ENCODE measurements at regions of chr13 and their contacts with region 1.

Region 1: GRCh38 chr13:95137096-95137495 is 164.2 kb downstream of the ABCC4 start:
- DNase-seq: no peak

Region 2: DNA sequence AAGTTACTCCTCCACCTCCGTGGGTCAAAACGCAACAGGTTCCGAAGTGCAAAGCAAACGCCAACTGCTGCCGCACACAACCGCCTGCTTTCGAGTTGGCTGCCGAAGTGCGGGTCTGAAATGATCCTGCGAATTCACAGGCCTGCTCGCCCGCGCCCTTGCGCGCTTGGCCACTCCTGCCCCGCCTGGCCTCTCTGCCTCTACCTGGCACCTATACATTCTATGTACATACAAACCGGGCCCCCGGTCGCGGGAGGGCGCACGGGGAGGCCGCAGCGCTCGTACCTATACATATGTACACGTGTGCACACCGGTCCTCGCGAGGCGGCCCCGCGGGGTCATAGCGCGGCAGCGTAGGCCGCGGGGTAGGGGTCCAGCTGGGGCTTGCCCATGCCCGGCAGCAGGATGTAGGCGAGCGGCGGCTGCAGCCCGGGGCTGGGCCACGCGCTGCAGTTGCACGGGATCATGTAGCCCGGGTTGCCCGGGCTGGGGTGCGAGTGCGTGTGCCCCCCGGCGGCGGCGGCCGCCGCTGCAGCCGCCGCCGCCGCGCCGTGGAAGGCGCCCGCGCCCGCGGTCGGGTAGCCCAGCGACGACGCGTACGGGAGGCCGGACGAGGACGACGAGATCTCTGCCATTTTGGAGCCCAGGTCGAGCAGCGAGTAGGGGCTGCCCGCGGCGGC is 426.1 kb before region 1 on chr13:
- in situ Hi-C with region 1: loop called (anchors 25 kb)
- DNase-seq: peak; percentile 34

Region 3: DNA sequence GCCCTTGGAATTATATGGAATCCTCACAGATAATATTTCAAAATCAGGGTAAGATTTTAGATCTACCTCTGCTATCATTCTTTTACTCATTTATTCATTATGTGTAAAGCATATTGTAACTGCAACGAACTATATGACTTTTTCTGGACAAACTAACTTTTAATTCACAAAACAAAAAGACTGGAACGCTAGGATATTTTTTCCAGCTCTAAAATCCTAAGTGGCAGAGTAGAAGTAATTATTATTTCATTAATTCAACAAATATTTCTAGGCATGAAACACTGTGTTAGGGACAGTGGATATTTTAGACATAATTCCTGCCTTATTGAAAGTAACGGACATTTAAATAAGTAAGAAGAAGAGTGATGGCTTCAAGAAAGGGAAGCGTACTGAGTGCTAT is 397.9 kb before region 1 on chr13:
- in situ Hi-C with region 1: no loop called
- DNase-seq: no peak

Region 4: DNA sequence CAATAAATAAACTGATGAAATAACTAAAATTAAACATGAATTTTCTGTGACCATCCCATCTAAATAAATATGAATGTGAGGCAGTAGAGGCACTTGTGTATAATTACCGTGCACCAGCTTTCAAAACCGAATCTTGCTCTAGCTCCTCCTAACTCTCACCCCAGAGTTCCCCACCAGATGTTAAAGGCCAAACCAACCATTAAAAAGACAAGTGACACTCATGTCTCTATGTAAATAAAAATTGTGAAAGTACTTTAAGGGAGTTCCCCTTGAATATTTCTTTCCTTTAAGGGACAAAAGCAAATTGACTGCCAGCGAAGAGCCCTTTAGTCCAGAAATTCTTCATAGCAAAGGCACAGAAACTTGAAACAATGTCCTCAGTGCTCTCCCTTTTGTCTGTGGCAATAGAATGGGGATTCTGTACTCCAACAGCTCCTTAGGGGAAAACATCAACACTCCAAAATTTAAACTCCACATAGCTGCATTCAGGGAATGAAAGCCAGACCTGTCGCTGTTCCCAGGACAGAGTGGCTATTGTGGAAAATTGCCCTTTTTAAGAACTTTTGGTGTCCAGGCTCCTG is 323.1 kb before region 1 on chr13:
- in situ Hi-C with region 1: no loop called
- DNase-seq: no peak

Region 5: DNA sequence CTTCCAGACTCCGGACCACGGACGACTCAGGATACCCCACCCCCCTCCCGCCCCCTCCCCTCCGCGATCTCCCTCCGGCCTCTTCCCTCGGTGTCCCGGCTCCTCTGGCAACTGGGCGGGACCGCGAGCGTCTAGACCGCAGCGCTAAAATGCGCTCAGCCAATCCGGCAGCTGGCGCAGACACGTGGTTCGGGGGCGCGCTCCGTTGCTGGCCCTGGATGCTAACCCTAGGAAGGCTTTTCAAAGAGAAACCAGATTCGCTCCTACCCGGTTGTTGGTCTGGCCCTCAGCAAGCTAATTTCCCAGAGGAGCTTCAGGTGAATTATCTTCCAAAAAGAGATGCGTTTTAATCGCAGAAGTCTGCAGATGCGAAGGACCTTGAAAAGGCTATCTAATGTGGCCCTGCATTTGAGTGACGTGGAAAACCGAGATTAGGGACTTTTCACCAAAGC is 507.5 kb after region 1 on chr13 and contains the start of gene DZIP1:
- in situ Hi-C with region 1: no loop called
- DNase-seq: peak; percentile 84